Sciatic nerve (tissue), 2 donors: ENCODE measurements at regions of chr9 and their contacts with region 1.

Region 1: DNA sequence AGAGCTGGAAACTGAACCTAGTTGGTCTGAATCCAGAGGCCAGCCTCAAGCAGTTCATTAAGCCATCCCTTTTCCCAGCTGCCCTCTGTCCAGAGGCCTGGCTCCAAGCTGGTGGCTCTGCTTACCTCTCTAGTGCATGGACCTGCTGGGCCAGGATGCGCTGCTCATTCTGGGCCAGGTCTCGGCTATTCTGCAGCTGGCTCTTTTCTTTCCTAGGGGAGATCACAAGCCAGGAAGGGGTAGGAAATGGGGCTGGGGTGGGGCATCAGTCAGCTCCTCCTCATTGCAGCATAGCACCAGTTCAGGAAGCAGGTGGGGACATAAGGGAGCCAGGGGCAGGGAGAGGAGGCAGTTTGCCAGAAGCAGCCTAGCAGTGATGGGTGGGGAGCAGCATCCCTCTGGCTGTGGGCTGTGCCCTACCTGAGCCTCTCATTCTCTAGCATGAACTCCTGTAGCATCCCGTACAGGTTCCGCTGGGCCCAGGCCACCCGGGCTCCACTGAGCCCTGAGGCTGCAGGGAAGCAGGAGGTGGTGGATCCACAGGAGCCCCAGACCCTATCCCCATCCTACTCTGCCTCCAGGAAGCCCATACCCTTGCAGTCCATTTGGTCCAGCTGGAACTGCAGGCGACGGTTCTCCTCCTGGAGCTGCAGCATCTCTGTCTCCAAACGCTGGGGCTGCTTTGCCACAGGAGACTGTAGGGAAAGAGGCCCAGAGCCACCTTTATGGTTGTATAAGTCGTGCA is 5.2 kb downstream of the KIF12 start:
- DNase-seq: no peak
- ATAC-seq: no peak

Region 2: DNA sequence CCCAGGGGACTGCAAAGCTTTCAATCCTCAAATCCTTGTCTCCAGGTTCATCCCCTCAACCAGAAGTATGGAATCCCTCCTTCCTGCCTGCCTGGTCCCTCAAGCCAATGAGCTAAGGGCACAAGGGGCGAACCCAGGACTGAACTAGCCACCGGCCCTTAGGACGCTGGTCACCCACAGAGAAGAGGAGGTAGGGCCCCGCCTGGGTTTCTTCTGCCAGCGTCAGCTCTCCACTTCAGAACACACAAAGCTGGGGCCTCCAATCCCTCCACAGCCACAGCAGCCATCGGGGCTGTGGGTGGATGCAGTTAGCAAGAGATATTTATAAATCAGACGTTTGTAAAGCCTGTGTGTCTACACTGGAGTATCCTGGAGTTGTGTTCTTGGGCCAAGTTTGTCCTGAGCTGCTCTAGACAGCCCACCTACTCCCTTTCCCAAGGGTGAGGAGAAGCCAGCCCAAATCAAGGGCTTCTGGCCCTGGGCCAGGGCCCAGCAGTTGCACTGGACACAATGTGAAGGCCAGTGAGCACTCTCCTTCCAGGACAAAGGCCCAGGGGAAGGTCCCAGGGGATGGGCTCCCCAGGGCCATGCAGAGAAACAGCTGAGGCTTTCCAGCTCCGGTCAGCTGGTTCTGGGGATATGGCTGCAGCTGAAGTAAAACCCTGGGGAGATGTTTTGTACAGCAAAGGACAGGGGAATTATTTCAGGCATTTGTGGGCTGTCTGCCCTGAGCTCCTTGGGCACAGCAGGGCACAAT is 34.7 kb before region 1 on chr9:
- intact Hi-C with region 1: no loop called
- DNase-seq: no peak
- ATAC-seq: peak; percentile 33

Region 3: GRCh38 chr9:114137747-114138230 is 43.9 kb after region 1 on chr9:
- intact Hi-C with region 1: loop called (anchors 2 kb)
- DNase-seq: no peak
- ATAC-seq: no peak

Region 4: DNA sequence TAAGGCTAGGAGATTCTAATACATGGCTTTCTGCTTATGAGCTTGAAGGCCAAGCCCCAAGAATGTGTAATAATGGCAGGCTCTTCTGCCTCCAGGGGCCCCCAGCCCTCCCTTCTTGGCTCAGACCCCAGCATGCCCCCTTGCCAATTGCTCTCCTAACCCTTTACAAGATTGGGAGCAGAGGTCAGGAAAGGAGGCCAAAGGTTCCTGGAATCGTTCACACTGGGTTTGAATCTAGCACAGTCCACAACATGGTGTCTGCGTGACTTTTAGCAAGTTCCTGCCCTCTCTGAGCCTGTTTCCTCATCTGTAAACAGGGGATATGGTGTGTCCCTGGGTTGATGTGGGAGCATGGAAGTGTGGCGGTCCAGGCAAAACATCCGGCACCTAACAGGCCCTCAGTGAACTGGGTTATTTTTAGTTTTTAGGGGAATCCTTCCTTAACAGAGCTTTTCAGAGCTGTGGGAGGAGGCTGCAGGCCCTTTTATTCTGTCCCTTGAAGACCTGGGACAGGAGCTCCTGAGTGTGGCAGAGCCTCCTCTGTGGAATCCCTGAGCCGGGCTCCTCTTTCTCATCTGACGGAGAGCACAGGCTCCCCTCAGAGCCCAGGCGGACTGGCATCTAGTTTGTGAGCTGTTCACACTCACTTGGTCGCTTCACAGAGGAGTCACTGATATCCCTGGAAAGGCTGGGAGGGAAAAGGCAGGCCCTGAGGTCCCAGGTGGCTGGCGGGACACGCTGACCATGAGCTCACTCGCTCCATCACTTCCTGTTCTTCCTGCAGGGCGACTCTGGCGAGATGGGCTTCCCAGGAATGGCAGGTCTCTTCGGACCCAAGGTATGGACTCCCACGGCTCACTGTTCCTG is 205.6 kb after region 1 on chr9:
- intact Hi-C with region 1: loop called (anchors 5 kb)
- DNase-seq: peak; percentile 37
- ATAC-seq: peak; percentile 24